Sigmoid colon (tissue), 7 donors: ENCODE measurements at regions of chr17 and their contacts with region 1.

Region 1: DNA sequence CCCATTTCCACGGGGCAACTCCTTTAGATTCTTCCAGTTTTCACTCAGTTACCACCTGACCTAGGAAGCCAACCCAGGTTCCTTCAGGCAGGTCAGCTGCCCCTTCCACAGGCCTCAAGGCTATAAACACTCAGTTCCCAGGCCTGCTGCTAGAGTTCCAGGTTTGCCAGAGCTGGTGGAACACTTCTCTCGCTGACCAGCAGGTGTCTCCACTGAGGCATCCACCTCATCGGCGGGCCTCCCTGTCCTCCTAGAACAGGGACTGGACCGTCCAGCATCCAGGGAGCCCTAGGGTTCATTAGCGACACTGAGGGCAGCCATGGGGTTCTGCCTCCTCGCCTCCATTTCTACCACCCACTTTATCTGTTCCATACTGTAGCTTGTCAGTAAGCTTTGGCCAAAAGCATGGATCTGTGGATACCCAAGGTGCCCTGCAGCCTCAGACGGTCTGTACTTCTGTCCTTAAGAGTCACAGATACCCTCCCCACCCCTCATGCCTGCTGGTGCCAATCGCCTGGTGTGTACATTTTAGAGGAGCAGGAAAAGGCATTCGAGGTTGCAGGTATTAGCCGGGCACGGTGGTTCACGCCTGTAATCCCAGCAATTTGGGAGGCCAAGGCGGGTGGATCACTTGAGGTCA is 29.0 kb downstream of the PIMREG start:
- DNase-seq: peak; percentile 83
- H3K4me3 ChIP-seq: no peak overlapping the region
- H3K27ac ChIP-seq: peak overlapping the region in 1 of 4 donors; percentile 68
- H3K4me1 ChIP-seq: peaks cover 0 to 25% (median 0%) of the 10 kb centered on the region in 4 donors
- H3K27me3 ChIP-seq: no peaks in the 10 kb centered on the region
- CTCF ChIP-seq: peak; percentile 78 to 95 (median 90)
- EP300 ChIP-seq: no peak
- POLR2A ChIP-seq: no peak

Region 2: DNA sequence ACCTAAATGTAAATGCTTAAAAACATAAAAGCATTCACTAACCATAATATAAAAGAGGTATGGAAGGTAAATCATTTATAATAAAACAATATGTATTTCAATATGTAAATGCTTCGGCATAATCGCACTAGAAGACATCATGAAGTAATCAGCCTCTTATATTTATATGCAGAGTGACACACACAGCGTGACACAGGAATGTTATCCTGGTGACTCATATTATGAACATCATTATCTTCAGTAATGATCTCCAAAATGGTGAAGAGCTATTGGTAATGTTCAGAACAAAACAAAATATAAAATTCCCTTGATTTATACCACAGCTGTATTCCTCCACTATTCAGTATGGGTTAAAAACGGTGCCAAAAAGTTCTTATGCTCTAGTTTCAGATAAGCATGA is 92.2 kb before region 1 on chr17:
- intact Hi-C with region 1: no loop called
- DNase-seq: no peak
- H3K4me3 ChIP-seq: no peak overlapping the region
- H3K27ac ChIP-seq: no peak overlapping the region
- H3K4me1 ChIP-seq: no peaks in the 10 kb centered on the region
- H3K27me3 ChIP-seq: peaks cover 0 to 5% (median 0%) of the 10 kb centered on the region in 3 donors
- CTCF ChIP-seq: no peak
- EP300 ChIP-seq: no peak
- POLR2A ChIP-seq: no peak

Region 3: GRCh38 chr17:6555331-6556120 is 82.3 kb after region 1 on chr17:
- intact Hi-C with region 1: loop called (anchors 5 kb)
- DNase-seq: no peak
- H3K4me3 ChIP-seq: peak overlapping the region; percentile 62 to 92 (median 70)
- H3K27ac ChIP-seq: peak overlapping the region; percentile 81 to 86 (median 83)
- H3K4me1 ChIP-seq: peaks cover 0 to 49% (median 31%) of the 10 kb centered on the region in 4 donors
- H3K27me3 ChIP-seq: peaks cover 0 to 14% (median 0%) of the 10 kb centered on the region in 3 donors
- CTCF ChIP-seq: no peak
- EP300 ChIP-seq: no peak
- POLR2A ChIP-seq: no peak

Region 4: GRCh38 chr17:6574687-6575595 is 101.7 kb after region 1 on chr17:
- intact Hi-C with region 1: loop called (anchors 5 kb)
- DNase-seq: no peak
- H3K4me3 ChIP-seq: no peak overlapping the region
- H3K27ac ChIP-seq: no peak overlapping the region
- H3K4me1 ChIP-seq: peaks cover 0 to 22% (median 15%) of the 10 kb centered on the region in 4 donors
- H3K27me3 ChIP-seq: no peaks in the 10 kb centered on the region
- CTCF ChIP-seq: no peak
- EP300 ChIP-seq: no peak
- POLR2A ChIP-seq: no peak

Region 5: GRCh38 chr17:6640536-6641373 is 167.5 kb after region 1 on chr17 and contains the starts of genes KIAA0753 and TXNDC17:
- intact Hi-C with region 1: loop called (anchors 5 kb)
- DNase-seq: peak; percentile 95
- H3K4me3 ChIP-seq: peak within 1 kb of the TSS; percentile 71 to 84 (median 80)
- H3K27ac ChIP-seq: peak within 1 kb of the TSS; percentile 80 to 88 (median 85)
- H3K4me1 ChIP-seq: peaks cover 0 to 39% (median 32%) of the 10 kb centered on the region in 4 donors
- H3K27me3 ChIP-seq: no peaks in the 10 kb centered on the region
- CTCF ChIP-seq: no peak
- EP300 ChIP-seq: no peak
- POLR2A ChIP-seq: peak; percentile 77 to 80
- total RNA-seq, gene KIAA0753: 14.1 to 18.3 (median 14.5) TPM
- total RNA-seq, gene TXNDC17: 37.3 to 152 (median 120) TPM

Region 6: GRCh38 chr17:6936370-6937028 is 463.3 kb after region 1 on chr17:
- intact Hi-C with region 1: no loop called
- DNase-seq: peak; percentile 74
- H3K4me3 ChIP-seq: peak overlapping the region; percentile 26 to 47 (median 42)
- H3K27ac ChIP-seq: peak overlapping the region; percentile 40 to 60 (median 58)
- H3K4me1 ChIP-seq: no peaks in the 10 kb centered on the region
- H3K27me3 ChIP-seq: no peaks in the 10 kb centered on the region
- CTCF ChIP-seq: no peak
- EP300 ChIP-seq: no peak
- POLR2A ChIP-seq: no peak